ENCODE measurements at regions of chr12 and their contacts with region 1.

Region 1: DNA sequence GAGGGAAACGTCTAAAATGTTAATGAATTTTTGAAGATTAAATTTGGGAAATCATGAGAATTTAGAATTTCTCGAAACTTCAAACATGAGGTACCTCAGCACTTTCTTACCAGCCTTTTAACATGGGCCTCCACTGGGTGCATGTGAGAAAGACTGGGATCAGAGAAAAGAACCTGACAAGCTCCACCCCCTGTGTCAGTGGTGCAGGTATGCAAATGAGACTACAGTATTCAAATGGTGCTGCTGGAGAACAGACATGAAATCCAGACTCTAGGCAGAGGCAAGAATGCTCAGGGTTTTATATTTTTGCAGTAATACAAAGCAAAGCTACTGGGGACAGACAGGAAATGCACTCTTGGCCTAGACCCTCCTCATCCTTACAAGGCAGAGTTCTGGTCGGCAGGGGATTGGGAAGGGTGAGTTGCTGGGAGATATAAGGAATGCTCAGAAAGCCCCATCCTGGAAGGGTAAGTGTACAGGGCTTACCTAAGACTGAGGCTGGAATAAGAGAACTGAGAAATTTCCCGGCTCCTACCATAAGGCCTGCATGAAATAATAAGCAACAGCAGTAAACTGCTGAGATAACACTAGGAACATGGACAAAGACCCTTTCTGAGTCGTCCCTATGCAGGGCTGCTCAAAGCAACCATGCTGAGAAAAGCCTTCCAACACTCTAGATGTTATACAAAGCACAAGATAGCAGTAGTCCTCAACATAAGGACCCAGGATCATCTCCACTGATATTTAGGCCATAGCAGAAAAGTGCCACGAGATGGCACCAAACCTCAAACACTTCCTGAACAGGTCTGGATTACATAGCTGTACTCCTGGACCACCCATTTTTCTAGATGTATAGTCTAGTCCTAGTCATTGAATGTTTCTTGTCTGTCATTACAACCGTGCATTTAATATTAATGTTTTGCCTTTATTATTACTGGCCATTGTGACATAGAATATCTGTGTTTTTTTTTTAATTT is 260.8 kb downstream of the RASSF9 start:
- DNase-seq: no peak
- ATAC-seq: peak; percentile 65

Region 2: DNA sequence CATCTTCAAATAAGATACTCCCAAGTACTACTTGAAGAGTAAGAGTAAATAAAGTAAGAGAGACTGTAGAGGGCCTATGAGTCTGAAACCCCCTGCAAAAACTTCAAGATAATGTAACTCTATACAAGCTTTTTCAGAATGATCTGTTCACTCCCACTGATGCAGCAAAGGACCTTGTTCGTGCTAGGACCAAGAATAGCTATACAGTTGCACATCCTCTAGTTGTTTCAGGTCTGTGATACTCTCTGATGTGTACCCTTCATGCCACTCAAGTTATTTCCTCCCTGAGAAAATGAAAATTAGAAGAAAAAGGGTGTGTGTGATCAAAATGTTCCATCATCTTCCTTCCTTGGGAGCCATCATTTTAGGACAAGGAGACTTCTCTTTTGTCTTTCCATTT is 91.0 kb before region 1 on chr12:
- intact Hi-C with region 1: loop called (anchors 10 kb)
- DNase-seq: no peak
- ATAC-seq: no peak

Region 3: DNA sequence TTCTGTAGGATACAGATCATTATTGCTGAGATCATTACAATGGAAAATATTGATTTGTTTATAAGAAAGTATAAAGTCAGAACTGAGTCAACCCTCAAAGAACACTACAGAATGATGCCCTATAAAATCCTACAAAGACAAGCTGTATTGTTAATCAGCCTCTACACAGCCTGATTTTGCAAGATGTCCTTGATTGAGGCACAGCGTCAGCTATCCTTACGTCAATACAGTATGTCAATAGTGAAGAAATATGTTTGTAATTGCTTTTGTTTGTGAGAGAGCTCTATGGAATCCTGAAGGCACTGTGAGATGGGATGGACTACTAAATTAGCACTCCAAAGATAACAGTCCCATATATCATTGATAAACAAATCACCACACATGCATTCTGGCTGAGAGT is 190.0 kb after region 1 on chr12:
- intact Hi-C with region 1: no loop called
- DNase-seq: no peak
- ATAC-seq: no peak